Breast epithelium (tissue), 4 donors: ENCODE measurements at regions of chr6 and their contacts with region 1.

Region 1: DNA sequence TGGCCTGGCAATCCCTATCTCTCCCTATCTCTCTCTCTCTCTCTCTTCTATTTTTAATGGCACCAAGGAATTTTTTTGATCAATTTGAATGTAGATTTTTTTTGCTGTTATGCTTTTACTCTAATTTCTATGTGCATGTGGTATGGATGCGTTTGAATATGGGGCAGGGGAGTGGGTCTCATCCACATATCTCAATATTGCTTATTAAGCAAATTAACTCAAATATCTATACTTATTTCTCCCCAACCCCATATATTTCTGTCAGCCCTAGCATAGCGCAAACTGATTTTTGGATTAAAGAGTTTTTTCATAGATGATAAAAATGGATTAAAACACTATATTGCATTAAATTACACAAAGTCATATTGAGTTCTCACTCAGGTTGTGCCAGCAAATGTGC is 210.2 kb downstream of the KHDRBS2 start:
- DNase-seq: no peak
- H3K4me3 ChIP-seq: no peak overlapping the region
- H3K27ac ChIP-seq: no peak overlapping the region
- H3K4me1 ChIP-seq: no peaks in the 10 kb centered on the region
- H3K27me3 ChIP-seq: no peaks in the 10 kb centered on the region
- CTCF ChIP-seq: no peak
- POLR2A ChIP-seq: no peak

Region 2: DNA sequence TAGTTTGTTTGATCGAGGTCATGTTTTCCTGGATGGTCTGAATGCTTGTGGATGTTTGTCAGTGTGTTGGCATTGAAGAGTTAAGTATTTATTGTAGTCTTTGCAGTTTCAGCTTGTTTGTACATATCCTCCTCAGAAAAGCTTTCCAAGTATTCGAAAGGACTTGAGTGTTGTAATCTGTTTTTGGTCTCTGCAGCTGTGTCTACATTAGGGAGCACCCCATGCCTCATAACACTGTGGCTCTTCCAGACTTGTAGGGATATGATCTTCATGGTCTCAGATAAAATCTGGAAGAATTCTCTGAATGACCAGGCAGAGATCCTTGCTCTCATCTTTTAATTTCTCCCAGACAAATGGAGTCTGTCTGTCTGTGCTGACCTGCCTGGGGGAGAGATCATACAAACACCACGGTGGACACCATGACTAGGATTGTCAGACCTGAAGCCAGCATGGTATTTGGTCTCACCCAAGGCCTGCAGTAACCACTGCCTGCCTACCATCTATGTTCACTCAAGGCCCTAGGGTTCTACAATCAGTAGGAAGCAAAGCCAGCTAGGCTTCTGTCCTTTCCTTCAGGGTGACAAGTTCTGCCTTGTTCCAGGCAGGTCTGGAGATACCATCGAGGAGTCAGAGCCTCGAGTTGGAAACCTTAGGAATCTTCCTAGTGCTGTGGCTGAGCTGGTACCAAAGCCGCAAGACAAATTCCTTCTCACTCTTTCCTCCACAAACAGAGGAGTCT is 324.8 kb after region 1 on chr6:
- intact Hi-C with region 1: loop called (anchors 5 kb)
- DNase-seq: no peak
- H3K4me3 ChIP-seq: no peak overlapping the region
- H3K27ac ChIP-seq: no peak overlapping the region
- H3K4me1 ChIP-seq: no peaks in the 10 kb centered on the region
- H3K27me3 ChIP-seq: no peaks in the 10 kb centered on the region
- CTCF ChIP-seq: no peak
- POLR2A ChIP-seq: no peak